Activated CD4-positive, alpha-beta memory T cell treated with anti-CD3 and anti-CD28 coated beads, Interleukin-2, amount 10 ng/mL, durations not matched to agents 7 days and 5 days (primary cell): ENCODE measurements at regions of chr1 and their contacts with region 1.

Region 1: DNA sequence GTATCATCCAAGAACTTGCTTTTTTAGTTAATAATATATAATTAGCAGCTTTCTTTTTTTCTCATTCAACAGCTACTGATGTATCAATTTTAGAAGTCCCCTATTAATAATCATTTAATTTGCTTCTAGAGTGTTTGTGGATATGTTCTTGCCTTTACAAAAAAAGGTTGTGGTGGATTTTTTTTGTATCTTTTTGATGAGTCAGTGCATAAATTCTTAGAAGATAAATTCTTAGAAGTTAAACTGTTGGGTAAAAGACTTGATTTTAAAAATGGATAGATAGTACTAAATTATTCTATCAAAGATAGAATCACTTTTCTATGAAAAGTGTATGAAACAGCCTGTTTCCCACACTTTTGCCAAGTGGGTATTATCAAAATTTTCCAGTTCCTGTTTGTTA is 11.9 kb downstream of the FGGY start:
- DNase-seq: no peak
- H3K4me3 Mint-ChIP-seq: no peak overlapping the region
- H3K27ac Mint-ChIP-seq: no peak overlapping the region
- H3K4me1 Mint-ChIP-seq: peaks cover 20% of the 10 kb centered on the region
- H3K27me3 Mint-ChIP-seq: no peaks in the 10 kb centered on the region

Region 2: GRCh38 chr1:59296358-59297256 is 12.2 kb before region 1 on chr1 and contains the start of gene FGGY:
- CTCF ChIA-PET with region 1: no interaction called
- POLR2A ChIA-PET with region 1: interaction called, 11 read pairs
- DNase-seq: peak; percentile 91
- H3K4me3 Mint-ChIP-seq: peak within 1 kb of the TSS; percentile 88
- H3K27ac Mint-ChIP-seq: peak within 1 kb of the TSS; percentile 88
- H3K4me1 Mint-ChIP-seq: peaks cover 32% of the 10 kb centered on the region
- H3K27me3 Mint-ChIP-seq: no peaks in the 10 kb centered on the region
- total RNA-seq, gene FGGY: 7.0 to 7.7 TPM